PC-9 (cell line): ENCODE measurements at regions of chr1 and their contacts with region 1.

Region 1: GRCh38 chr1:238107322-238107721 is 216.6 kb upstream of the ZP4 start:
- DNase-seq: no peak
- H3K4me3 ChIP-seq: no peak overlapping the region
- H3K27ac ChIP-seq: no peak overlapping the region
- H3K4me1 ChIP-seq: no peaks in the 10 kb centered on the region
- H3K27me3 ChIP-seq: no peaks in the 10 kb centered on the region
- CTCF ChIP-seq: no peak

Region 2: DNA sequence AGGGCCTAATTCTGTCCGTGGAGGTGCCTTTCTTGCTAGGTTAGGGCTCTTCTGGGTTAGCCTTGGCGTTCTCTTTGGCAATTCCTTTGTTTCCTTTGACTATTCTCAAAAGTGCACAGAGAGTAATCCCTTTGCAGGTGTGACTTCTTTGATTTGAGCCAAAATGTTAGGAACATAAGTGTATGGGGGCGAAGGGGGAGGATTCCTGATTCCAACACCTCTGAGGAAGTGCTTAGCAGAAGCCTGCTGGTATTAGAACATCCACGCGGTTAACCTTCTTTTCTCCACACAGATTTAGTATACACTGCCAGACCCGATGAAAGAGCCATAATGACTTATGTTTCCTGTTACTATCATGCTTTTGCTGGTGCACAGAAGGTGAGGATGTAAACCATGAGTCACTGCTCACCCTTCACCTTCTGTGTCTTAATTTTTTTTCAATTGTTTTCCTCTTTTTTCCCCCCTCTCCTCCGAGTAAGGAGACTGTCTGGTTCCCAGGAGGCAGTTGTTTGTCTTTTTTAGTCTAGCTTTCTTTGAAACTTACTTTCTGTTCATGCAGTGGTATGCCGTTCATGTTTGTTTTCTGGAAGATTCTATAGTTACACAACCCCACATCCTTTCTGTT is 1373.1 kb before region 1 on chr1:
- CTCF ChIA-PET with region 1: no interaction called
- POLR2A ChIA-PET with region 1: interaction called, 12 read pairs
- intact Hi-C with region 1: no loop called
- DNase-seq: no peak
- H3K4me3 ChIP-seq: no peak overlapping the region
- H3K27ac ChIP-seq: no peak overlapping the region
- H3K4me1 ChIP-seq: no peaks in the 10 kb centered on the region
- H3K27me3 ChIP-seq: peaks cover 94% of the 10 kb centered on the region
- CTCF ChIP-seq: no peak